Activated naive CD4-positive, alpha-beta T cell treated with anti-CD3 and anti-CD28 coated beads, Interleukin-2, amount 10 ng/mL, durations not matched to agents 7 days and 5 days (primary cell): ENCODE measurements at regions of chr10 and their contacts with region 1.

Region 1: DNA sequence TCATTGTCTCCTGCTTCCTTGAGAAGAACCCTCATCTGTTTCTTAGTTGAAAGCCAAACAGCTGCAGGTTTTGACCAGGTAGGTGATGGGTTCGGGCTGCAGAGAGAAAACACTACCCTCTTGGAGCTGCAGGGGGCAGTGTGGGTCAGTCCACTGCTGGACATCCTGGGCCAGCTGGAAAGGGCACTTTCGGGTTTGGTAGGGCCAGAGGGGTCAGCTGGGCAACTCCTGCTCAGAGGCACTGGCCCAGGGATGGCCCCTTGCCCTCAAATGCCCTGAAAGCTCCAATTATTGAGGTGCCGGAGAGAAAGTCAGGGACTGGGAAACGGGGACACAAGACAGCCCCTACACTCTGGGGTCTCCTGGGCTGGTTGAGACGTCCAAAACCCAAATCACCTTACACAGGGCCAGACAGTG is 90.7 kb downstream of the MKI67 start:
- DNase-seq: peak; percentile 76
- H3K4me3 Mint-ChIP-seq: no peak overlapping the region
- H3K27ac Mint-ChIP-seq: no peak overlapping the region
- H3K4me1 Mint-ChIP-seq: no peaks in the 10 kb centered on the region
- H3K27me3 Mint-ChIP-seq: peaks cover 36% of the 10 kb centered on the region

Region 2: DNA sequence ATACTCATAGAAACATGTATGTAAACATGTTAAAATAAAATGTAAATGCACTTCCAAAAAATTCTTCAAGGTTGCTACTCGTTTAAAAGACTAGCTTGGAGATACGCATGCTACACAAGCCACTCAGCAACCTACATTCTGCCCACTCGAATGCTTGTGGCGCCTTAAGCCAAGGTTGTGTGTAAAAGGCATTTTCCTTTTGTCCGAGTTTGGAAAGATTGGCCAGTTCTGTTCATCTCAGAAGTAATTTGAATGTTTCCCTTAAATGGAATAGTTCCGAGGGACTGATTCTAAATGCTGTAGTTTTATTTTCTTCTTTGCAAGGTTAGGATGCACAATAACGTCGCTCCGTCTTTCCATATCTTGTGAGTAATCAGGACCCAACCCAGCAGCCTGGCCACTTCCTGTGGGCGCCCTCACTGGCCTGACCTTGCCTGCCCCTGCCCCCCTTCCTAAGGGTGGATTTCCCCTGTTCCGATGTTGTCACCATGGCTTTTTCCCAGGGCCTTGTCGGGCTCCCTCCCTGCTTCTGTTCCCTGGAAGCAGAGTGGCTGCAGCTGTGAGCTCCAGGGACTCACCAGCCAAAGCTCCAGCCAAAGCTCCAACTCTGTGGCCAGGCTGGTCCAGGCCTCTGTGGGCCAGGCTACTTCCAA is 58.1 kb before region 1 on chr10:
- CTCF ChIA-PET with region 1: no interaction called
- DNase-seq: no peak
- H3K4me3 Mint-ChIP-seq: no peak overlapping the region
- H3K27ac Mint-ChIP-seq: no peak overlapping the region
- H3K4me1 Mint-ChIP-seq: peaks cover 6% of the 10 kb centered on the region
- H3K27me3 Mint-ChIP-seq: peaks cover 25% of the 10 kb centered on the region

Region 3: DNA sequence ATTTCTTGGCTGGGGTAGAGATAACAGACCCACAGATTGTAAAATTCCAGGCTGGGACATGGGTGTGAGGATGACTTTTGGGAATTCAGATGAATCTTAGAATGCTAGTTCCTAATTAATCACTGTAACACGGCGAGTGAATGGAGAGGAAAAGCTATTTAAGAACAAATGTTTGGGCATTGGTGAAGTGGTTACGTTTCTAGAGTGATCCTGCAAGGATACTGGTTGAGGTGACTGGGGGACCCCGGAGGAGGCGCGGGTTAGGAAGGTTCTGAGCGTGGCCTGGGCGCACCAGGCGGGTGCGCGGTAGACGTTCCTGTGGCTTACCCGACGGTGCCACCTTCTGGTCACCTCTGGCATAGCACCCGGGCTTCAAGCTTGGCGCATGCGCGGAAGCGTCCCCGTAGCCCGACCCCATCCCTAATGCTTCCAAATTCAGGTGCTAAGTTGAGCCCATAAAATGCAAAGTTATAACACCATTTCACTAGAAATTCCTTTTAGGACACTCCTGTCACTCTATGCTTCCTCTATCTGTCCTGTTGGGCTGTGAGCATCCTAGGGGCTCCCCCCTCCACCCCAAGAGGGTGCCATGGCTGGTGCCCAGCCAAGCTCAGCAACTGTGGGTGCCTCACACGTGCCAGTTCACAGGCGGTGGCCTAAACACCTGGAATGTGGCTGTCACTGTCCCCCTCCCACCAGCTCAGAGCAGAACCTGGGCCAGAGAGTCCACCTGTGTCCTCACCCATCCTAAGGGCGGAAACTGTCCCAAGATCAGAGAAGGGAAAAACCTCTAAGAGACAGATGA is 24.2 kb before region 1 on chr10:
- CTCF ChIA-PET with region 1: interaction called, 12 read pairs
- DNase-seq: peak; percentile 88
- H3K4me3 Mint-ChIP-seq: no peak overlapping the region
- H3K27ac Mint-ChIP-seq: peak overlapping the region; percentile 26
- H3K4me1 Mint-ChIP-seq: peaks cover 9% of the 10 kb centered on the region
- H3K27me3 Mint-ChIP-seq: peaks cover 27% of the 10 kb centered on the region

Region 4: DNA sequence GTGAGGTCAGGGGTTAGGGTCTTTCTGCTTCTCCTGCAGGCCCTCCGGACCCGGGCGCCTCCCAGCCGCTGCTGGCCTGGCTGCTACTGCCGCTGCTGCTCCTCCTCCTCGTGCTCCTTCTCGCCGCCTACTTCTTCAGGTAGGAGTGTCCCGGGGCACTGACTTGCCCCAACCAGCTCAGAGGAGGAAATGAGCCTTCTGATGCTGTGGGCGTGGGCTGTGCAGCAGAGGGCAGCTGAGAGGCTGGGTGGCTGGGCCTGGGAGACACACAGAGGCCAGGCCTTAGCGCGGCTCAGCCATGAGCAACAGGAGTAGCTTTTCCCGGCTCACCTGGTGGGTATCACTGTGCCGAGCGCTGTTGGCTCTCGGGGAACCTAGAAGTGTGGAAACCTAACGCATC is 11.8 kb after region 1 on chr10:
- CTCF ChIA-PET with region 1: interaction called, 34 read pairs
- DNase-seq: peak; percentile 93
- H3K4me3 Mint-ChIP-seq: peak overlapping the region; percentile 81
- H3K27ac Mint-ChIP-seq: peak overlapping the region; percentile 97
- H3K4me1 Mint-ChIP-seq: peaks cover 66% of the 10 kb centered on the region
- H3K27me3 Mint-ChIP-seq: peaks cover 1% of the 10 kb centered on the region

Region 5: DNA sequence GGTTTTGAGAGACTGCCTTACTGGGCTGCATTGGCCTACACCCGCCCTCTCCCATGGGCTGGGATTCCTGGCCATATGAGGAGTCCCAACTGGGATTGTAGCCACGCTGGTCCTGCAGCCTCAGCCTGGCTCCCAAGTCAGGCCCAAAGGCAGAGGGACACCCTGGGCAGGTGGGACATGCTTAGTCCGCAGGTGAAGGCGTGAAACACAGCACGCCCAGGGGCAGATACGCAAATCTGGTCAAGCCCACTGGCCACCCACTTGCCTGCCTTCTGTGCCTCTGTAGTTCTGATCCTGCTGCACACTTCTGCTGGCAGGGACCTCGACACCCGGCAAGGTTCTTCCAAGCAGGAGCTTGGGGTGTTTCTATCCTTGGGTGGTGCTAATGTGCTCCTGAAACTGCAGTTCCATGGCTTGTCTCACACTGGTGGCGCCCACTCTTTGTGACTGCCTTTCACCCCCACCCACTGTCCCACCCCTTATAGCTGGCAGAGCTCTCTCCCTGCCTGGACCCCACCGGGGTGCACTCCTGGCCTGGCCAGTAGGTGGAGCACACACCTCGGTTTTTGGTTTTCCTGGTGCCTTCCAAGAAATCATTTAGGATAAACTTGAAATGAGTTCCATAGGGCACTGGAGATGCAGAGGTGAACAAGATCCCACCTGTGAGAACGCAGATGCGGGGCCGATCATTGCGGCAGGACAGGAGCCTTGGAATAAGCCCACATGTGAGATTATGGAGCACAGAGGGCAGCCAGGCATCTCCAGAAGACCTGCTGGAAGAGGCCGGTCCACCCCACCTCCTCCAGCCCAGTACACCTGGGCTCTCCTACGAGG is 42.8 kb after region 1 on chr10:
- CTCF ChIA-PET with region 1: interaction called, 288 read pairs
- DNase-seq: peak; percentile 60
- H3K4me3 Mint-ChIP-seq: no peak overlapping the region
- H3K27ac Mint-ChIP-seq: no peak overlapping the region
- H3K4me1 Mint-ChIP-seq: peaks cover 8% of the 10 kb centered on the region
- H3K27me3 Mint-ChIP-seq: no peaks in the 10 kb centered on the region

Region 6: GRCh38 chr10:128268015-128268722 is 232.6 kb after region 1 on chr10:
- CTCF ChIA-PET with region 1: no interaction called
- DNase-seq: no peak
- H3K4me3 Mint-ChIP-seq: no peak overlapping the region
- H3K27ac Mint-ChIP-seq: no peak overlapping the region
- H3K4me1 Mint-ChIP-seq: no peaks in the 10 kb centered on the region
- H3K27me3 Mint-ChIP-seq: peaks cover 58% of the 10 kb centered on the region